GM13977 (cell line): ENCODE measurements at regions of chr2 and their contacts with region 1.

Region 1: GRCh38 chr2:219177552-219178376 is at the start of gene RETREG2:
- DNase-seq: peak; percentile 99
- CTCF ChIP-seq: peak; percentile 64

Region 2: DNA sequence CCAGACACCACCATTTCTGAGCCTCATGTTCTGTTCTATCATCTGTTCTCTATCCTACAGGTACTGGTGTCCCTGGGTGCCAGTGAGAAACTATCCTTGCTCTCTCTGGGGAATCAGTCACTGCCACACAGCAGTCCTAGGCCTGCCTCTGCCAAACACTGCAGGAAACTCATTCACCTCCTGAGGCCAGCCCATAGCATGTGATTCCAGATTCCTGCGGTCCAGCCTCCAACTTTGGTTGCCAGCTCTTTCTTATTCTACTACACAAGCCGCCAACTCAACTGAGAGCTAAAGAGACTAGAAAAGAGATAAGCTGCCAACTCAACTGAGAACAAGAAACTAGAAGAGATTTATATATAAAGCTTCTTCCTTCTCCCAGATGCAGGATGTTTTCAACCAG is 476.0 kb before region 1 on chr2:
- in situ Hi-C with region 1: no loop called
- DNase-seq: no peak
- CTCF ChIP-seq: no peak

Region 3: DNA sequence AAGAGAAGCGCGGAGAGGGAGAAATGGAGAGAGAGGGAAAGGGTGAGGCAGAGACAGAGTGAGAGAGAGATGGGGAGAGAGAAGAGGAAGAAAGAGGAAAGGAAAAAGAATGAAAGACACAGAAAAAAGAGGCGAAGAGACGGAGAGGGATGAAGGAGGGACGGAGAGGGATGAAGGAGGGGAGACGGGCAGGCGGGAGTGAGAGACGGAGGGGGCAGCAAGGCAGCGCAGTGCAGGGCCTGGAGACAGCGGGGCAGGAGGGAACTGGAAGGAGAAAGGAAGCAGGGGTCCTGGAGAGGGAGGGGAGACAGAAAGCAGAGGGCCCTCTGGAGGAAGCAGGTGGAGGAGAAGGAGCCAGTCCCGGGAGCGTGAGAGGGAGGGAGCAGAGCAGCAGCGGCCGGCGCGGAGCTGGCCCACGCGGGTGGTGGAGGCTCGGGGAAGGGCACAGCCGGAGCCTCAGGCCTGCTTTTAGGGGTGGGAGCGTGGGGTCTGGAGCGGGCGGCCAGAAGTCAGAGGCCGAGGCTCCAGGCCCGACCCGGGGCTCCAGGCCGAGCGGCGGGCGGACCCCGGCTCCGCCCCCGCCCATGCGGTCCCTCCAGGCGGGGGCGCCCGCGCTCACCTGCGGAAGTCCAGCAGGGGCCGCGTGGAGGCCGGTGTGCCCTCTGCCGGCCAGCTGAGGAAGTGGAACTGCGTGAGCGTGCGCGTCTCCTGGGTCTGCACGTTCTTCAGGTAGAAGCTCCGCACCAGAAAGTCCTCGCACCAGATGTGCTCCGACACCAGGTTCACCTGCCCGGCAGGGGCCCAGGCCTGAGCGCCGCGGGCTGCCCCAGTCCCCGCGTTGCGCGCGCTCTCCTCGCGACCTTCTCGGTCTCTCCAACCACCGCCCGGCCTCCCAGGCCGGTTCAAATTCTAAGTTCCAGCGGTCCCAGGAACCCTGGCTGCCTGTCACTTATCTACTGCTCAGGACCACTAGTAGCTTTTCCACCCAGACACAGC is 116.9 kb after region 1 on chr2:
- in situ Hi-C with region 1: loop called (anchors 10 kb)
- DNase-seq: peak; percentile 99
- CTCF ChIP-seq: peak; percentile 99

Region 4: GRCh38 chr2:219368690-219369195 is 191.0 kb after region 1 on chr2:
- in situ Hi-C with region 1: no loop called
- DNase-seq: no peak
- CTCF ChIP-seq: no peak